A673 (cell line): ENCODE measurements at regions of chr3 and their contacts with region 1.

Region 1: GRCh38 chr3:151327571-151328198 is 1.7 kb downstream of the P2RY13 start:
- DNase-seq: peak; percentile 42
- H3K4me3 ChIP-seq: no peak overlapping the region
- H3K27ac ChIP-seq: no peak overlapping the region
- H3K4me1 ChIP-seq: peaks cover 14% of the 10 kb centered on the region
- H3K27me3 ChIP-seq: no peaks in the 10 kb centered on the region
- CTCF ChIP-seq: peak; percentile 75

Region 2: GRCh38 chr3:151999936-152000335 is 672.3 kb after region 1 on chr3:
- CTCF ChIA-PET with region 1: interaction called, 13 read pairs
- POLR2A ChIA-PET with region 1: no interaction called
- intact Hi-C with region 1: no loop called
- DNase-seq: no peak
- H3K4me3 ChIP-seq: no peak overlapping the region
- H3K27ac ChIP-seq: no peak overlapping the region
- H3K4me1 ChIP-seq: no peaks in the 10 kb centered on the region
- H3K27me3 ChIP-seq: no peaks in the 10 kb centered on the region
- CTCF ChIP-seq: no peak